ENCODE measurements at regions of chr5 and their contacts with region 1.

Region 1: GRCh38 chr5:147949711-147950573 is 43.6 kb upstream of the C5orf46 start:
- DNase-seq: no peak

Region 2: GRCh38 chr5:148120317-148120716 is 170.4 kb after region 1 on chr5:
- intact Hi-C with region 1: loop called (anchors 5 kb)
- DNase-seq: no peak

Region 3: DNA sequence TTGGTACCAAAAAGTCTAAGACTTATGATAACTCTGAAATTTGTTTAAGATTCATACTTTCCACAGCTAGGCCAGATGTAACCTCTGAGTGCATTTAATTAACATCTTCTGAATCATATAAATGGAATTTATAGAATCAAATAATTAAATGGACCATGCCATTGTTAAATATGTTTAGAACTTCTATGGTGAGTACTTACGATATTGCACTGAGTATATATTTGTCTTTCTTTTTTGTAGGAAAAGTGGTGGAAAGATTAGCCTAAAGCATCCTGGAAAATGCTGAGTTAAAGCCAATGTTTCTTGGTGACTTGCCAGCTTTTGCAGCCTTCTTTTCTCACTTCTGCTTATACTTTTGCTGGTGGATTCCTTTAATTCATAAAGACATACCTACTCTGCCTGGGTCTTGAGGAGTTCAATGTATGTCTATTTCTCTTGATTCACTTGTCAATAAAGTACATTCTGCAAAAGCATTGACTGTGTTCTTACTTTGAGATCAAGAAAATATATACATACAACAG is 264.8 kb after region 1 on chr5:
- intact Hi-C with region 1: no loop called
- DNase-seq: no peak